ENCODE measurements at regions of chrX and their contacts with region 1.

Region 1: GRCh38 chrX:135024526-135024925 is 2.2 kb upstream of the RTL8B start:
- DNase-seq: no peak
- H3K4me3 ChIP-seq: no peak overlapping the region
- H3K27ac ChIP-seq: no peak overlapping the region
- H3K27me3 ChIP-seq: no peaks in the 10 kb centered on the region
- CTCF ChIP-seq: no peak

Region 2: GRCh38 chrX:135050603-135051002 is 26.1 kb after region 1 on chrX:
- CTCF ChIA-PET with region 1: no interaction called
- POLR2A ChIA-PET with region 1: interaction called, 10 read pairs
- DNase-seq: no peak
- H3K4me3 ChIP-seq: peak overlapping the region; percentile 71
- H3K27ac ChIP-seq: no peak overlapping the region
- H3K27me3 ChIP-seq: no peaks in the 10 kb centered on the region
- CTCF ChIP-seq: no peak

Region 3: GRCh38 chrX:135112096-135112729 is 87.7 kb after region 1 on chrX:
- CTCF ChIA-PET with region 1: no interaction called
- POLR2A ChIA-PET with region 1: no interaction called
- DNase-seq: no peak
- H3K4me3 ChIP-seq: no peak overlapping the region
- H3K27ac ChIP-seq: no peak overlapping the region
- H3K27me3 ChIP-seq: no peaks in the 10 kb centered on the region
- CTCF ChIP-seq: peak; percentile 74